ENCODE measurements at regions of chr7 and their contacts with region 1.

Region 1: GRCh38 chr7:149460493-149461277 is at the start of gene ZNF777:
- DNase-seq: peak; percentile 79
- ATAC-seq: peak; percentile 90
- H3K4me3 Mint-ChIP-seq: peak within 1 kb of the TSS; percentile 80
- H3K27ac Mint-ChIP-seq: peak within 1 kb of the TSS; percentile 65; the same call in 1 of the 2 replicates
- H3K4me1 Mint-ChIP-seq: peaks cover 17% of the 10 kb centered on the region
- H3K27me3 Mint-ChIP-seq: peaks cover 36% of the 10 kb centered on the region
- CTCF ChIP-seq: no peak
- total RNA-seq, gene ZNF777: 12.0 to 13.6 TPM (median 12.6 TPM) in 3 replicates

Region 2: GRCh38 chr7:149474309-149475114 is 13.8 kb after region 1 on chr7:
- CTCF ChIA-PET with region 1: interaction called, 14 read pairs
- POLR2A ChIA-PET with region 1: interaction called, 7 read pairs
- DNase-seq: no peak
- ATAC-seq: no peak
- H3K4me3 Mint-ChIP-seq: no peak overlapping the region
- H3K27ac Mint-ChIP-seq: no peak overlapping the region
- H3K4me1 Mint-ChIP-seq: peaks cover 12% of the 10 kb centered on the region
- H3K27me3 Mint-ChIP-seq: peaks cover 6% of the 10 kb centered on the region; the same call in 1 of the 2 replicates
- CTCF ChIP-seq: no peak